Gastrocnemius medialis (tissue), 4 donors: ENCODE measurements at regions of chr10 and their contacts with region 1.

Region 1: GRCh38 chr10:118754720-118755480 is at the start of gene CACUL1:
- DNase-seq: peak; percentile 100
- ATAC-seq: peak; percentile 93 to 95
- H3K4me3 ChIP-seq: peak within 1 kb of the TSS; percentile 81 to 100 (median 96)
- H3K27ac ChIP-seq: peak within 1 kb of the TSS; percentile 87 to 99 (median 98)
- H3K4me1 ChIP-seq: peaks cover 38 to 39% of the 10 kb centered on the region in 2 donors
- H3K27me3 ChIP-seq: no peaks in the 10 kb centered on the region
- CTCF ChIP-seq: no peak
- POLR2A ChIP-seq: peak; percentile 87 to 92
- total RNA-seq, gene CACUL1: 28.5 to 59.5 (median 38.2) TPM

Region 2: DNA sequence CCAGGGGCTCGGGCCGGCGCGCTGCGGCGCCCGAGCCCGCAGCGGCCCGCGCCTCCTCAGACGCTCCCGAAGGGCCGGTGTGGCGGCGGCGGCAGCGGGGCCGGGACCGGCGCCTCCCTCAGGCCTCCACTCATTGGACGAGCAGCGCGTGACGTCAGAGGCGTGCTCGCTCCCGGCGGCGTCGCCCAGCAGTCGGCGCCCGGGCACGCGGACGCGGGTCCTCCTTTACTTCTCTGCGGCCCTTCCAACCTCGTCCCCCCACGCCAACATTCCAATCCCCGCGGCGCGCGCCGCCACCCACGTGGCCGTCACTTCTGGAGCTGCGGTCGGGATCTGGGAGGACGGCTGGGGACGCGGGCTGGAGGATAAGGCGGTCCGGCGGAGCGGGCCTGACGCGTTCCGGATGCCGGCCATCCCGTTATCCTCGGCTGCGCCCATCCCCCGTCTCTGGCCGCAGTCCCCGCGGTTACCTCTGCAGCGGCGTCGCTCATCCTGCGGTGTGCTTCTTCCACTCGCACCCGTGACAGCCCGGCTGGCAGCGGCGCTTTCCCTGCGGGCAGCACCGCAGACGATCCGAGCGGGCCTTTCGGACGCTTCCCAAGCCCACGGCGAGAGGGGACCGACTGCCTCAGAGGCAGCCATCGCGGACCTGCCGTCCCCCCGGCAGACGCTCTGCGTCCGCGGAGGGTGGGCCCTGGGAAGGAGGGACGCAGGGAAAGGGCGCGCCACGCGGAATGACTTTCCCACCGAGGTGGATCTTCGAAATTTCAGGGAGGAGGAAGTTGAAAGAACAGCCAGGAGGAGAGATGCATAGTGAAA is 1379.3 kb before region 1 on chr10 and contains the start of gene PDZD8:
- in situ Hi-C with region 1: no loop called
- intact Hi-C with region 1: loop called (anchors 10 kb)
- DNase-seq: peak; percentile 87 to 89
- ATAC-seq: peak; percentile 90 to 91
- H3K4me3 ChIP-seq: peak within 1 kb of the TSS; percentile 84 to 96 (median 95)
- H3K27ac ChIP-seq: peak within 1 kb of the TSS; percentile 87 to 94 (median 92)
- H3K4me1 ChIP-seq: peaks cover 29 to 31% of the 10 kb centered on the region in 2 donors
- H3K27me3 ChIP-seq: peaks cover 0 to 2% (median 0%) of the 10 kb centered on the region in 3 donors
- CTCF ChIP-seq: peak in 1 of 5 experiments; percentile 12
- POLR2A ChIP-seq: peak; percentile 90 to 94
- total RNA-seq, gene PDZD8: 15.9 to 25.0 (median 18.1) TPM

Region 3: GRCh38 chr10:118362103-118362502 is 392.8 kb before region 1 on chr10:
- in situ Hi-C with region 1: no loop called
- intact Hi-C with region 1: no loop called
- DNase-seq: no peak
- ATAC-seq: no peak
- H3K4me3 ChIP-seq: no peak overlapping the region
- H3K27ac ChIP-seq: no peak overlapping the region
- H3K4me1 ChIP-seq: no peaks in the 10 kb centered on the region
- H3K27me3 ChIP-seq: peaks cover 0 to 4% (median 0%) of the 10 kb centered on the region in 3 donors
- CTCF ChIP-seq: no peak
- POLR2A ChIP-seq: no peak

Region 4: GRCh38 chr10:118800920-118801319 is 46.0 kb after region 1 on chr10:
- in situ Hi-C with region 1: no loop called
- intact Hi-C with region 1: no loop called
- DNase-seq: no peak
- ATAC-seq: no peak
- H3K4me3 ChIP-seq: no peak overlapping the region
- H3K27ac ChIP-seq: no peak overlapping the region
- H3K4me1 ChIP-seq: peaks cover 0 to 5% of the 10 kb centered on the region in 2 donors
- H3K27me3 ChIP-seq: no peaks in the 10 kb centered on the region
- CTCF ChIP-seq: peak; percentile 11 to 47 (median 34)
- POLR2A ChIP-seq: no peak

Region 5: DNA sequence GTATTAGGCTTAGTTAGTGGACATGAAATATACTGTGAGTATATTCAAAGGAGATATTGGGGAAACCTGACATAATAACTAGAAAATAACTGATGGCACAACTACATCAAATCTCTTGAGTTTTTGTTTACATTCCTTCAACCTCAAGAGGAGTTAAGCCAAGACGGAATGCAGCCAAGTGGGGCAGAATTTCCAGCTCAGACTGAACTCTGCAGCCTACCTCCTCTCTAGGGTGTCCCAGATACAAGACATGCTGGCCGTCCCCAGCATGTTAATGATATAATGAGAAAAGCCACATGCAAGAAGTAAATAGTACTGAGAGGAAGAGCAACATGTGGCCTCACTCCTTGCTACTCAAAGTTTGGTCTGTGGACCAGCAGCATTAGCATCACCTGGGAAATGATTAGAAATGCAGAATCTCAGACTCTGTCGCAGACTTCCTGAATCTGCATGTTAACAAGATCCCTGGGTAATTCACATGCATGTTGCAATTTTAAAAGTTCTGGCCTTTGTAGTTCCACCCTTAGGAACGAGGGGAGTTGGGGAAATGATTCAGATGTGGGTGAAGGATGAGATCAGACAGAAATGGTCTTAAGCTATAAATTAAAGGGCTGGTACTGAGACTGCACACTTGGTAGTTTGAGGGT is 118.3 kb after region 1 on chr10:
- in situ Hi-C with region 1: no loop called
- intact Hi-C with region 1: no loop called
- DNase-seq: no peak
- ATAC-seq: no peak
- H3K4me3 ChIP-seq: no peak overlapping the region
- H3K27ac ChIP-seq: no peak overlapping the region
- H3K4me1 ChIP-seq: peaks cover 0 to 12% of the 10 kb centered on the region in 2 donors
- H3K27me3 ChIP-seq: no peaks in the 10 kb centered on the region
- CTCF ChIP-seq: no peak
- POLR2A ChIP-seq: no peak

Region 6: GRCh38 chr10:118958984-118959916 is 204.3 kb after region 1 on chr10:
- in situ Hi-C with region 1: no loop called
- intact Hi-C with region 1: loop called (anchors 10 kb)
- DNase-seq: peak; percentile 74 to 84
- ATAC-seq: peak; percentile 91 to 96
- H3K4me3 ChIP-seq: no peak overlapping the region
- H3K27ac ChIP-seq: peak overlapping the region; percentile 49 to 82 (median 68)
- H3K4me1 ChIP-seq: peaks cover 17 to 28% of the 10 kb centered on the region in 2 donors
- H3K27me3 ChIP-seq: no peaks in the 10 kb centered on the region
- CTCF ChIP-seq: no peak
- POLR2A ChIP-seq: no peak

Region 7: GRCh38 chr10:119080521-119081260 is 325.8 kb after region 1 on chr10 and contains the start of gene EIF3A:
- in situ Hi-C with region 1: no loop called
- intact Hi-C with region 1: loop called (anchors 5 kb)
- DNase-seq: peak; percentile 81 to 92
- ATAC-seq: peak; percentile 87 to 90
- H3K4me3 ChIP-seq: peak within 1 kb of the TSS; percentile 77 to 94 (median 92)
- H3K27ac ChIP-seq: peak within 1 kb of the TSS; percentile 95 to 99 (median 97)
- H3K4me1 ChIP-seq: peaks cover 30 to 32% of the 10 kb centered on the region in 2 donors
- H3K27me3 ChIP-seq: no peaks in the 10 kb centered on the region
- CTCF ChIP-seq: peak in 1 of 5 experiments; percentile 9
- POLR2A ChIP-seq: peak; percentile 96 to 97
- total RNA-seq, gene EIF3A: 136 to 240 (median 191) TPM

Region 8: GRCh38 chr10:119368991-119369869 is 614.3 kb after region 1 on chr10:
- in situ Hi-C with region 1: no loop called
- intact Hi-C with region 1: loop called (anchors 10 kb)
- DNase-seq: no peak
- ATAC-seq: no peak
- H3K4me3 ChIP-seq: peak overlapping the region in 2 of 4 donors; percentile 5 to 35
- H3K27ac ChIP-seq: peak overlapping the region; percentile 71 to 81 (median 76)
- H3K4me1 ChIP-seq: peaks cover 50 to 71% of the 10 kb centered on the region in 2 donors
- H3K27me3 ChIP-seq: no peaks in the 10 kb centered on the region
- CTCF ChIP-seq: no peak
- POLR2A ChIP-seq: no peak